HEK293 (cell line): ENCODE measurements at regions of chr9 and their contacts with region 1.

Region 1: GRCh38 chr9:68999393-69000105 is 14.4 kb downstream of the PRKACG start:
- H3K4me3 ChIP-seq: no peak overlapping the region
- H3K27ac ChIP-seq: no peak overlapping the region
- H3K4me1 ChIP-seq: no peaks in the 10 kb centered on the region
- CTCF ChIP-seq: peak; percentile 86

Region 2: GRCh38 chr9:68974431-68974830 is 25.1 kb before region 1 on chr9:
- CTCF ChIA-PET with region 1: interaction called, 10 read pairs
- POLR2A ChIA-PET with region 1: interaction called, 3 read pairs
- H3K4me3 ChIP-seq: no peak overlapping the region
- H3K27ac ChIP-seq: no peak overlapping the region
- H3K4me1 ChIP-seq: peaks cover 4% of the 10 kb centered on the region; the same call in 1 of the 2 replicates
- CTCF ChIP-seq: no peak

Region 3: GRCh38 chr9:69019808-69020207 is 20.3 kb after region 1 on chr9:
- CTCF ChIA-PET with region 1: interaction called, 11 read pairs
- POLR2A ChIA-PET with region 1: no interaction called
- H3K4me3 ChIP-seq: no peak overlapping the region
- H3K27ac ChIP-seq: no peak overlapping the region
- H3K4me1 ChIP-seq: no peaks in the 10 kb centered on the region
- CTCF ChIP-seq: no peak